Activated naive CD8-positive, alpha-beta T cell treated with anti-CD3 and anti-CD28 coated beads, Interleukin-2, amount 10 ng/mL, durations not matched to agents 7 days and 5 days (primary cell): ENCODE measurements at regions of chr7 and their contacts with region 1.

Region 1: DNA sequence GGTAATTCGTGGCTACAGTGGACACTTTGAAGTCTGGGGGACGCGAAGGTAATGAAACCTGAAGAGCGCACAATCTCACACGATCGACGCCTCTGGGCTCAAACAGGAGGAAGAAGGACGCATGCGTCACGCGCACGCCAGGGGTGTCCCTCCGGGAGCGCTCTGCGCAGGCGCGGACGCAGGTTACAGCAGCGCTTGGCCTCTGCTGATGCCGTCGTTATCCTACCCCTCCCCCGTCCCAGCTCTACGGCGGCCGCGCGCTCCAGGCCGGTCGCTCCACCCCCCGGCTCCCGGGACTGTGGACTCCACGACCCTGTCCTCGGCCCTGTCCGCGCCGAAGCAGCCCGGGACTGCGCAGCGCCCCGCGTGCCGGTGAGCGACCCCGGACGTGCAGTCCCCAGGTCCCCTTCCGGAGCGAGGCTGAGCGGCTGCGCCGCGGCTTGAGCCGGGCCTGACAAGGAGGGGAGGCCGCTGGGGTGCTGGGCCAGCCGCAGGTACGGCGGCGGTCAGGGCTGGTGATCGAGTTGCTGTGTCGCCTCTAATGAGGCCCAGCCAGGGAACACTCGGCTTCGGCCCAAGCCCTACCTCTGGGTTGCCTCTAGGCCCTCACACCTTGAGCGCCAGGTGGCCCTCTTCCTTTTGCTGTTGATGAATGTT is at the start of gene TMEM106B:
- DNase-seq: peak; percentile 97
- ATAC-seq: peak; percentile 94
- H3K4me3 Mint-ChIP-seq: peak within 1 kb of the TSS; percentile 94
- H3K27ac Mint-ChIP-seq: peak within 1 kb of the TSS; percentile 95
- H3K4me1 Mint-ChIP-seq: peaks cover 30% of the 10 kb centered on the region
- H3K27me3 Mint-ChIP-seq: peaks cover 11% of the 10 kb centered on the region
- total RNA-seq, gene TMEM106B: 45.7 to 48.8 TPM

Region 2: DNA sequence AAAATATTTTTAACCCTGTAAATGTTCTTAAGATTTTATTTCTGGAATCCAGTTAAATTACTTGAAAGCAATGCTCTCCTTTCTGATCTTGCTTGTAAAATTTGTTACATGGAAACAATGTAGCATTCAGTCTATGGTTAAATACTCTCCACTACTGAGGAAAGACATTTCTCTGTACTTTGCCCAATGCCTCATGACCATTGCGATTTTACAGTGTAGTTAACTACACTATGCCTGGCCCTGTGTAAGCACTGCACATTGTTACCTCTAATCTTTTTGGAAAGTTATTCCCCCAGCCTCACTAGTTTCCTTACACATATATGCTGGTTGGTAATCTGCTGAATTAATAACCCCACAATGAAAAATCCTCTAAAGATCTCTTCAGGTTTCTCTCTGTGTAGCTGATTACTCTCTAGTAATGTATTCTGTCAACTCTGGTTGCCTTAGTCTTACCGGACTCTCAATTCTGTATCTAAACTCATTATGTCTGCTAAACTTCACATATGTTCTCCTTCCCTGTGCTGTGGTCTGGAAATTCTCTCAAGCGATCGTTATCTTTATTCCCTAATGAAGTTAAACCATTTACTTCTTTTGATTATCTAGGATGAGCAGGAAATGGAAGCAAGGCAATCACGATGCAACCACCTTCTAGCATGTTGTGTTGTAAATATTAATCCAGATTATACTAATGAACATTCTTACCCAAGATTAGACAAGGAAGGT is 58.8 kb before region 1 on chr7:
- POLR2A ChIA-PET with region 1: no interaction called
- DNase-seq: no peak
- ATAC-seq: no peak
- H3K4me3 Mint-ChIP-seq: no peak overlapping the region
- H3K27ac Mint-ChIP-seq: no peak overlapping the region
- H3K4me1 Mint-ChIP-seq: no peaks in the 10 kb centered on the region
- H3K27me3 Mint-ChIP-seq: peaks cover 8% of the 10 kb centered on the region

Region 3: GRCh38 chr7:12257582-12257981 is 46.4 kb after region 1 on chr7:
- POLR2A ChIA-PET with region 1: interaction called, 21 read pairs
- DNase-seq: no peak
- ATAC-seq: peak; percentile 99
- H3K4me3 Mint-ChIP-seq: no peak overlapping the region
- H3K27ac Mint-ChIP-seq: no peak overlapping the region
- H3K4me1 Mint-ChIP-seq: peaks cover 12% of the 10 kb centered on the region
- H3K27me3 Mint-ChIP-seq: no peaks in the 10 kb centered on the region

Region 4: GRCh38 chr7:12297283-12298115 is 86.3 kb after region 1 on chr7:
- POLR2A ChIA-PET with region 1: interaction called, 12 read pairs
- DNase-seq: no peak
- ATAC-seq: peak; percentile 73
- H3K4me3 Mint-ChIP-seq: no peak overlapping the region
- H3K27ac Mint-ChIP-seq: peak overlapping the region; percentile 59
- H3K4me1 Mint-ChIP-seq: peaks cover 12% of the 10 kb centered on the region
- H3K27me3 Mint-ChIP-seq: no peaks in the 10 kb centered on the region

Region 5: GRCh38 chr7:12314199-12314598 is 103.0 kb after region 1 on chr7:
- POLR2A ChIA-PET with region 1: interaction called, 11 read pairs
- DNase-seq: no peak
- ATAC-seq: peak; percentile 93
- H3K4me3 Mint-ChIP-seq: peak overlapping the region; percentile 53
- H3K27ac Mint-ChIP-seq: peak overlapping the region; percentile 54
- H3K4me1 Mint-ChIP-seq: peaks cover 19% of the 10 kb centered on the region
- H3K27me3 Mint-ChIP-seq: no peaks in the 10 kb centered on the region